H1 (cell line): ENCODE measurements at regions of chr17 and their contacts with region 1.

Region 1: GRCh38 chr17:47995241-47995935 is 24.5 kb downstream of the CDK5RAP3 start:
- DNase-seq: no peak
- H3K4me3 ChIP-seq: no peak overlapping the region
- H3K27ac ChIP-seq: no peak overlapping the region
- H3K4me1 ChIP-seq: peaks cover 14 to 32% (median 25%) of the 10 kb centered on the region in 4 experiments
- H3K27me3 ChIP-seq: no peaks in the 10 kb centered on the region
- CTCF ChIP-seq: no peak
- EP300 ChIP-seq: no peak
- POLR2A ChIP-seq: no peak
- RAD21 ChIP-seq: no peak

Region 2: GRCh38 chr17:47978324-47978723 is 17.1 kb before region 1 on chr17:
- CTCF ChIA-PET with region 1: interaction called, 60 read pairs
- POLR2A ChIA-PET with region 1: interaction called, 12 read pairs
- DNase-seq: peak in 1 of 2 experiments; percentile 83
- H3K4me3 ChIP-seq: no peak overlapping the region
- H3K27ac ChIP-seq: no peak overlapping the region
- H3K4me1 ChIP-seq: no peaks in the 10 kb centered on the region; a peak in 1 of 7 replicates
- H3K27me3 ChIP-seq: no peaks in the 10 kb centered on the region
- CTCF ChIP-seq: peak; percentile 91 to 96 (median 94)
- EP300 ChIP-seq: no peak
- POLR2A ChIP-seq: no peak
- RAD21 ChIP-seq: peak; percentile 92 to 97

Region 3: GRCh38 chr17:48011405-48012150 is 16.2 kb after region 1 on chr17:
- CTCF ChIA-PET with region 1: interaction called, 698 read pairs
- POLR2A ChIA-PET with region 1: interaction called, 11 read pairs
- DNase-seq: peak in 1 of 2 experiments; percentile 72
- H3K4me3 ChIP-seq: peak overlapping the region; percentile 61 to 75 (median 66)
- H3K27ac ChIP-seq: no peak overlapping the region
- H3K4me1 ChIP-seq: peaks cover 4 to 14% (median 9%) of the 10 kb centered on the region in 4 experiments
- H3K27me3 ChIP-seq: peaks cover 0 to 13% (median 8%) of the 10 kb centered on the region in 4 experiments; a peak in 6 of 7 replicates
- CTCF ChIP-seq: peak; percentile 40 to 66 (median 63)
- EP300 ChIP-seq: no peak
- POLR2A ChIP-seq: no peak
- RAD21 ChIP-seq: peak; percentile 45 to 60; a peak in 3 of 4 replicates

Region 4: GRCh38 chr17:48062273-48062672 is 66.9 kb after region 1 on chr17:
- CTCF ChIA-PET with region 1: no interaction called
- POLR2A ChIA-PET with region 1: no interaction called
- DNase-seq: no peak
- H3K4me3 ChIP-seq: no peak overlapping the region
- H3K27ac ChIP-seq: no peak overlapping the region
- H3K4me1 ChIP-seq: peaks cover 0 to 4% (median 2%) of the 10 kb centered on the region in 4 experiments; a peak in 3 of 7 replicates
- H3K27me3 ChIP-seq: no peaks in the 10 kb centered on the region
- CTCF ChIP-seq: no peak
- EP300 ChIP-seq: no peak
- POLR2A ChIP-seq: no peak
- RAD21 ChIP-seq: no peak